ENCODE measurements at regions of chr12 and their contacts with region 1.

Region 1: GRCh38 chr12:108618079-108618952 is 15.4 kb downstream of the SELPLG start:
- DNase-seq: peak; percentile 85
- H3K4me3 Mint-ChIP-seq: no peak overlapping the region
- H3K27ac Mint-ChIP-seq: no peak overlapping the region
- H3K4me1 Mint-ChIP-seq: no peaks in the 10 kb centered on the region
- H3K27me3 Mint-ChIP-seq: no peaks in the 10 kb centered on the region
- CTCF ChIP-seq: peak; percentile 94

Region 2: GRCh38 chr12:108441549-108441948 is 176.8 kb before region 1 on chr12:
- CTCF ChIA-PET with region 1: no interaction called
- POLR2A ChIA-PET with region 1: no interaction called
- intact Hi-C with region 1: no loop called
- DNase-seq: no peak
- H3K4me3 Mint-ChIP-seq: no peak overlapping the region
- H3K27ac Mint-ChIP-seq: no peak overlapping the region
- H3K4me1 Mint-ChIP-seq: peaks cover 9% of the 10 kb centered on the region
- H3K27me3 Mint-ChIP-seq: no peaks in the 10 kb centered on the region
- CTCF ChIP-seq: no peak

Region 3: GRCh38 chr12:108547686-108548085 is 70.6 kb before region 1 on chr12:
- CTCF ChIA-PET with region 1: interaction called, 16 read pairs
- POLR2A ChIA-PET with region 1: no interaction called
- intact Hi-C with region 1: no loop called
- DNase-seq: no peak
- H3K4me3 Mint-ChIP-seq: no peak overlapping the region
- H3K27ac Mint-ChIP-seq: no peak overlapping the region
- H3K4me1 Mint-ChIP-seq: peaks cover 18% of the 10 kb centered on the region
- H3K27me3 Mint-ChIP-seq: no peaks in the 10 kb centered on the region
- CTCF ChIP-seq: no peak

Region 4: DNA sequence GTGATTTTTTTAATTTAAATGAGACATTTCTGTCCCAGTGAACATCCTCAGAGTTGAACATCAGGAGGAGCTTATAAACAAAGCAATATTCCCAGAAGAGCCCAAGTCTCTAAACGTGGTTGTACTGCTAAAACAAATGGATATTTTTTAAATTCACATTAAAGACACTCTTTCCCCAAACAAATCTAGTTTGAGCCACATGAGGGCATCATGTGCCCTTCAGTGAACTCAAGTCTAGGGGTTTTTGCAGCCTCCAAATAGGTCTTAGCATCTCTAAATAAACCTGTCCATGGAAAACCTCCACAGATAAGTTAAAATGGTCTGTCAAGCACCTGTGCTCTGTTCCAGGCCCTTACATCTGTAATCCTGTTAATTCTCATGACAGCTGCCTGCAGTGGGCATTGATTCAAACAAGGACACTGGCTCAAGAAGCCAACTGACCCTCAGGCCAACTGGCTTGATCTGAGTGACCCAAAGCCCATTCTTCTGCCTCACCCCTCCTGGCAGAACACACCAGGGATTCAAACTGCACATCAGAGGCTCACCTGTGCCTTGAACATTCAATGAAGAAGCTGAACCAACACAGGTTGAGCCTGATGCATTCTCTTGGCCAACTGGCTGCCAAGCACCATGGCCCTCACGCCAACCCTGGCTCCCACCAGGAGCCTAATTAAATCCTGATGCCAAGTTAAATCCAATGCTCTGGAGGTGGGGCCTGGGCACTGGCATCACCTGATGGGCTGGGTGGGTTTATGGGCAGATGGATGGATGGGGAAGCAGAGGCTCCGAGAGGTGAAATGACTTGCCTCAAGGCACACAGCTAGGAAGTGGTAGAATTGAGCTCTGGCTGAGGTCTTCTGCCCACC is 47.3 kb before region 1 on chr12:
- CTCF ChIA-PET with region 1: interaction called, 274 read pairs
- POLR2A ChIA-PET with region 1: interaction called, 105 read pairs
- intact Hi-C with region 1: loop called (anchors 1 kb)
- DNase-seq: peak; percentile 33
- H3K4me3 Mint-ChIP-seq: no peak overlapping the region
- H3K27ac Mint-ChIP-seq: no peak overlapping the region
- H3K4me1 Mint-ChIP-seq: peaks cover 4% of the 10 kb centered on the region
- H3K27me3 Mint-ChIP-seq: peaks cover 14% of the 10 kb centered on the region
- CTCF ChIP-seq: peak; percentile 17

Region 5: DNA sequence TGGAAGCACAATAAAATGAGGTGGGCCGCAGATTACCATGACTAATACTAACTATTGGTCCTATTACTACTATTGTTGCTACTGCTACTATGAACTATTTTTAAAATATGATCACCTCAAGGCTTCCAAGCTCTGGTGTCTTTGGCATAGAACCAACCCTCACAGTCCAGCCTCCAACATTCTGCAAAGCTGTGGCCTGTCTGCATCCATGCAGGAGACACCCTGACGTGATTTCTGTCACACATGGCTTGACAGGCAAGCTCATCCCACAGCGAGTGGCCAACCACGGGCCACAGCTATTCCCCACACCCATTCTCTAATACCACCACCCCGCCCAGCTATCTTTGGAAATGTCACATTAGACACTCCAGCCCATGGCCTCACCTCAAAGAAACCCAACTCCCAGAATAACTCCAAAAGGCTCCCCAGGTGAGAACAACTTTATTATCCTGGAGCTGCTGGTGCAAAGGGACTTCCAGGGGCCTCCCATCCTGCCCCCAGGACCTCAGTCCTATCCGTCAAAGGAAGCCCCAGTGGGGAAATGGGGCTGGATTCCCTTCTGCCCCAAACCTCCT is 41.6 kb before region 1 on chr12:
- CTCF ChIA-PET with region 1: interaction called, 274 read pairs
- POLR2A ChIA-PET with region 1: no interaction called
- intact Hi-C with region 1: no loop called
- DNase-seq: no peak
- H3K4me3 Mint-ChIP-seq: no peak overlapping the region
- H3K27ac Mint-ChIP-seq: no peak overlapping the region
- H3K4me1 Mint-ChIP-seq: no peaks in the 10 kb centered on the region
- H3K27me3 Mint-ChIP-seq: peaks cover 14% of the 10 kb centered on the region
- CTCF ChIP-seq: no peak

Region 6: DNA sequence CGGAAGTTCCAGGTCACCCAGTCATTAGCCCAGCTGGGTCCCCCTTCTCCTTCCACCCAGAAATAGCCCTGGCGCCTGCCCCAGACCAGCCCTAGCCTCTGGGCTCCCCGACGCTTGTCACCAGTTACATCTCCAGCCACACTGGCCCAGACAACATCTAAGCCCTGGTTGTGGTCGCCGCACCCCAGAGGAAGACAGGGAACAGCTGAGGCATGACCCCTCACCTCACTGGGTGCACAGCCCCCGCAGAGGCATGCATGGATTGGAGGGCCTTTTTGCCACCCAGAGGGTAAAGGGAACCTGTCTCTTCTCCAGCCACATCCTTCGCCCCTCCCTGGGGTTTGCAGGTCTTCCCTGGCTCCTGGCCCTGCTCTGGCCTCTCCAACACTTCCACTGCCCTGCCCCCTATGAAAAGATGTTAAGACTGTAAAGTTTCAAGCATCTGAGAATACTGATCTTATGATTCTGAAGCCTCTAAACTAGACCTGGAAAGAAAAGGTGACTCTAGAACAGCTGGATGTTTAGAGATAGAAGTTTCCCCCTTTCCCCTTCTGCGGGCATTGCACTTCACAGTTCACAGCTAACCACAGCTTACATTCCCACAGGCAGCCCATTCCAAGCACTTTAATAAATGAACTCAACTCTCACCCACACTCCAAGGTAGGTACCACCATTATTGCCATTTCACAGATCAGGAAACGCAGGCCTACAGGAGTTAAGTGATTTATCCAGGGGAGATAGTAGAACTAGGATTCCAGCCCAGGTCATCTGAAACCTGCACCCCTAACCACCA is 35.1 kb before region 1 on chr12:
- CTCF ChIA-PET with region 1: interaction called, 13 read pairs
- POLR2A ChIA-PET with region 1: no interaction called
- intact Hi-C with region 1: no loop called
- DNase-seq: no peak
- H3K4me3 Mint-ChIP-seq: no peak overlapping the region
- H3K27ac Mint-ChIP-seq: no peak overlapping the region
- H3K4me1 Mint-ChIP-seq: no peaks in the 10 kb centered on the region
- H3K27me3 Mint-ChIP-seq: peaks cover 11% of the 10 kb centered on the region
- CTCF ChIP-seq: no peak

Region 7: GRCh38 chr12:108606492-108606891 is 11.8 kb before region 1 on chr12:
- CTCF ChIA-PET with region 1: interaction called, 14 read pairs
- POLR2A ChIA-PET with region 1: no interaction called
- intact Hi-C with region 1: no loop called
- DNase-seq: no peak
- H3K4me3 Mint-ChIP-seq: no peak overlapping the region
- H3K27ac Mint-ChIP-seq: no peak overlapping the region
- H3K4me1 Mint-ChIP-seq: no peaks in the 10 kb centered on the region
- H3K27me3 Mint-ChIP-seq: no peaks in the 10 kb centered on the region
- CTCF ChIP-seq: no peak

Region 8: DNA sequence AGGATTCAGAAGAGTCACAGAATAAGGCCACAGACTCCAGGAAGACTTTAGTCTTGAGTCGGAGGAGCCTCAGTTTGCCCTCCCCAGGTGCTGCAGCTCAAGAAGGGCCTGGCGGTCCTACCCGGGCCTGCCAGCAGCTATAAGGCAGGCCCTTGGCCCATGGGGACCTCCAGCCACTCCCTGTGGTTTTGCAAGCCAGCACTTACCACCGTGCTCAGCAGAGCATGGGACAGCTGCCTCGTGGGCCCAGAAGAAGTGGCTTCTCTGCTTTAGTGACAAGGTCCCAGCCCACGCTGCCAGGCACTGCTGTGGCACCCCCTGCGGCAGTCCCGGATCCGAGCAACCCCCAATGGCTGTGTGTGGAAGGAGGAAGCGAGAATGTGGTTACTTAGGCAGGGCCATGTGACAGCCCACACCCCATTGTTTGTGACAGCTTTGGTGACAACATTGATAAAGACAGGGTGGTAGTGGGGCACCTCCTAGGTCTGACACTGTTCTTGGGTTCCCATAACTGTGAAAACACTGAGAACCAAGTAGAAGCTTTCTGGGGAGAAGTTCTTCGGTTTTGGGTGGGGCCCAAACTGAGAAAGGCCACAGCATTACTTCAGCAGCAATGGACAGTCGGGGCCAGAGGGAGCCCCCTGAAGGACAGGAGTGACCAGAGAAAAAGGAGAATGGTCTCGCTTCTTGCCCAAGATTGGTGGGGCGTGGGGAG is 15.4 kb after region 1 on chr12 and contains the start of gene SELPLG:
- CTCF ChIA-PET with region 1: interaction called, 64 read pairs
- POLR2A ChIA-PET with region 1: interaction called, 3 read pairs
- intact Hi-C with region 1: no loop called
- DNase-seq: no peak
- H3K4me3 Mint-ChIP-seq: no peak within 1 kb of the TSS
- H3K27ac Mint-ChIP-seq: no peak within 1 kb of the TSS
- H3K4me1 Mint-ChIP-seq: peaks cover 8% of the 10 kb centered on the region
- H3K27me3 Mint-ChIP-seq: no peaks in the 10 kb centered on the region
- CTCF ChIP-seq: no peak
- total RNA-seq, gene SELPLG: 0.86 and 1.2 TPM in 2 replicates